Calu3 (cell line): ENCODE measurements at regions of chr1 and their contacts with region 1.

Region 1: DNA sequence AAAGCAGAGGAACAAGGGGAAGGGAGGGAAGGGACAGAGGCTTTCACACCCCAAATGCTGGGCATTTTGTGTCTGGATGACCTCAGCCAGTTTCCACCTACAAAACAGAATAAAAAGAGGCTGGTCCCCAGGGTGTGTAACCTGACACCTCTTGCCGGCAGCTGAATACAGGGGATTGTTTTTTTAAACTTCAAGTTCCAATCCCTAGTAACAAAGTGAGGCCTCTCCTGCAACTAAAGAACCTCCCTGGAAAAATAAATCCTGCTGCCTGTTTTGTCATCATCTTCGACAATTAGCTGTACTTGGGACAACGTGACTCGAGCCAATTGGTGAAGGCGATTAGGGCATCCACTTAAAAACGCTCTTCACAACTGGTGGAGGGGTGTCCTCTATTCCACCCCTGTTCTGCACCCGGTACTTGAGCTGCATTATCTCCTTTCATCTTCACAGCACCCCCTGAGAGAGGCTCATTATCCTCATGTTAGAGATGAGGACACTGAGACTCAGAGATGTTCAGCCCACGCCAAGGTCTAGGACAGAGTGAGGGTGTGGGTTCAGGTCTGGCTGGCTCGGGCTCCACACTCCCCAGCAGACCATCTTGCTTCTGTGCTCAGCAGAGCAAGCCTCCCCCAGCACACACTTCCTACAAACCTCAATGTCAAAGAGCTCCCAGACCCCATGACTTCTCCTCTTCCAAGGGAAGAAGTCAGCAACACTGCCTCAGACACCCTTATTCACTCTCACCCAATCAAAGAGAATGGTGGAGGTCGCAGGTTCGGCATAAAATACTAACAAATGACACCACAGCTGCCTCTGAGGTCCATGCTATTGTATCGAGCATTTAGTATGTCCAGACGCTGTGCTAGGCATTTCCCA is 15.2 kb downstream of the ITPKB start:
- DNase-seq: peak; percentile 44
- H3K4me3 Mint-ChIP-seq: no peak overlapping the region
- H3K27ac Mint-ChIP-seq: no peak overlapping the region
- H3K4me1 Mint-ChIP-seq: peaks cover 36% of the 10 kb centered on the region
- H3K27me3 Mint-ChIP-seq: no peaks in the 10 kb centered on the region
- CTCF ChIP-seq: no peak

Region 2: DNA sequence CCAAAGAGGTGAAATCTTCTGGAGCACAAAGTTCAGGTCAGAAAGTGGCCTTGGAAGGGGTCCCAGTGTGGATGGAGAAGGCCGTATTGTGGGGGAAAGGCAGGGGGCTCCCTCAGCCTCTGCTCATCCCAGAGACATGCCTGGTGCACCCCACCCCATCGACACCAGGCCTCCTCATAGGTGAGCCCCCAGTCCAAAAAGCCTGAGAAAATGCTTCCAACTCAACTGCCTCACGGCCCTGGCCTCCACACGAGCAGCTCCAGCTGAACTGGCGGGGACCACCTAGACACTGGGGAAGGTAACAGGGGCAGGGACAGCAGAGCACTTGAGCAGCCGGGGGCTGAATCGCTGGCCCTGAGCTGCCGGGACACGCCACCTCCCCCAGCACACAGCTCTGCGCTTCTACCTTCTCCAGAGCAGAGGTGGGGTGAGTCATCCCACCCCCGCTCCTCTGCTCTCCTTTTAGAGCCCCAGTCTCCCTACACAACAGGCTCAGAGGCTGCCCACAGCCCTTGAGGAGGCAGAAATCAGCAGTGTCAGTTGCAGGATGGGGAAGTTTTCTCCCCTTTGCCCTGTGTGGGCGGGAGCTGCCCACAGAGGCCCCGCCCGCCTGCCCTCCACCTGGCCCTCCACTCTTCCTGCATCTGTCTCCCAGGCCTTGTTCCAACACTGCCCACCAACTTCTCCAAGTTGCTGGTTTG is 80.9 kb before region 1 on chr1:
- CTCF ChIA-PET with region 1: no interaction called
- intact Hi-C with region 1: loop called (anchors 2 kb)
- DNase-seq: peak; percentile 66
- H3K4me3 Mint-ChIP-seq: no peak overlapping the region
- H3K27ac Mint-ChIP-seq: no peak overlapping the region
- H3K4me1 Mint-ChIP-seq: peaks cover 29% of the 10 kb centered on the region
- H3K27me3 Mint-ChIP-seq: no peaks in the 10 kb centered on the region
- CTCF ChIP-seq: no peak

Region 3: DNA sequence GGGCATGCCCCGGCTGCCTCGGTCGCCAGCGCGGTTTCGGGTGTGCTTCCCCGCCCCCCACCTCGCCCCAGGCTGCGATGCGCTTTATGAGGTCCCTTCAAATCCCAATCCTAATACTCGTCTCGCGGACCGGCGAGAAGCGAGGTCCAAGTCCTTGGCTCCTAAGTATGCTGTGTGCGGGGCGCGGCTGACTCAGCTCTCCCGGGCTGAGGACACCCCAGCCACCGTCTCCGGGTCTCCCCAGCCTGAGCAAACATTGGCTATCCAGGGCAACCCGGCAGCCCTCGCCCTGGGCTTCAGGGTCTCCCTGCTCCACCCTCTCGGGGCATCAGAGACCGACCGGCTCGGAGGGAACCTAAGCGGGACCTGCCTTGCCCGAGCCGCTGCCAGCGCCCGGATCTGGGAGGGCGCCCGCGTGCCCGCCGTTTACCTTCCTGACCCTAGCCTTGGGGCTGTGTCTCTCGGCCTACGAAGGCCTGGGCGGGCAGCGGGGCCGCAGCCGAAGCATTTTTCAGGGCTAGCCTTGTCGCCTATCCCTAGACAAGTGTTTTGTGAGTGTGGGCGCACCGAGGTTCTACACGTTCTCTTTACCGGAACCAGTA is 14.0 kb after region 1 on chr1:
- CTCF ChIA-PET with region 1: no interaction called
- intact Hi-C with region 1: loop called (anchors 2 kb)
- DNase-seq: peak; percentile 50
- H3K4me3 Mint-ChIP-seq: peak overlapping the region; percentile 70
- H3K27ac Mint-ChIP-seq: peak overlapping the region; percentile 20
- H3K4me1 Mint-ChIP-seq: no peaks in the 10 kb centered on the region
- H3K27me3 Mint-ChIP-seq: no peaks in the 10 kb centered on the region
- CTCF ChIP-seq: no peak

Region 4: GRCh38 chr1:226786550-226786949 is 62.7 kb after region 1 on chr1:
- CTCF ChIA-PET with region 1: no interaction called
- intact Hi-C with region 1: no loop called
- DNase-seq: no peak
- H3K4me3 Mint-ChIP-seq: no peak overlapping the region
- H3K27ac Mint-ChIP-seq: no peak overlapping the region
- H3K4me1 Mint-ChIP-seq: no peaks in the 10 kb centered on the region
- H3K27me3 Mint-ChIP-seq: peaks cover 39% of the 10 kb centered on the region
- CTCF ChIP-seq: no peak